Ascending aorta (tissue), 2 donors: ENCODE measurements at regions of chr17 and their contacts with region 1.

Region 1: DNA sequence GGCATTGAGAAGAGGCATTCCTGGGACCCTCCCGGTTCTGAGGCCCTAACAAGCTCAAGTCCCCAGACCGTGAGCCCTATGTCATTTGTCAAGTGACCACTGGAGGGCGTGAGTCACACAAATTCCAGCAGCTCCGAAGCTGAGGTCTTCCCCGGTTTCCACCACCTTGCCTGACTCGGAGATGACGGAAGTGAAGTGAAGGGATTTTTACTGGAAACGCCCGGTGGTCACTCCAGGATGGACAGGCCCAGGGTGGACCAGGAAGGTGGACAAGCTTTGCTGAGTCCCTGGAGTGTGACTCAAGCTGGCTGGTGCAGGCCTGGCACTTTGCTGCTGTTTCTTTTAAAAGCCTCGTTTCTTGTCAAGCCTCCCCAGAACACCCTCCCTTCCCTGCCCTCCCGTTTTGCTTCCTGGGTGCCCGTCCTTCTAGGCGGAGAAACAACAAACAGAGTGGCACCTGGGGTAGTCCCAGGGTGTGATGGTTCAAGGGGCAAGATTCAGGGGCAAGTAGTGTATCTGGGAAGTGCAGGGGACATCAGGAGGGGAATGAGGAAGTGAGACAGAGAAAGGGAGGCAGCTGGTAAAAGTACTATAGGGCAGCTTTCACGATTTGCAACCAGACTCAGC is 5.3 kb upstream of the NOS2 start:
- DNase-seq: peak; percentile 47 to 93
- H3K4me3 ChIP-seq: peak overlapping the region; percentile 1 to 55
- H3K27ac ChIP-seq: peak overlapping the region; percentile 17 to 36
- H3K4me1 ChIP-seq: no peaks in the 10 kb centered on the region
- H3K27me3 ChIP-seq: no peaks in the 10 kb centered on the region
- CTCF ChIP-seq: peak; percentile 74 to 79 (median 76)

Region 2: DNA sequence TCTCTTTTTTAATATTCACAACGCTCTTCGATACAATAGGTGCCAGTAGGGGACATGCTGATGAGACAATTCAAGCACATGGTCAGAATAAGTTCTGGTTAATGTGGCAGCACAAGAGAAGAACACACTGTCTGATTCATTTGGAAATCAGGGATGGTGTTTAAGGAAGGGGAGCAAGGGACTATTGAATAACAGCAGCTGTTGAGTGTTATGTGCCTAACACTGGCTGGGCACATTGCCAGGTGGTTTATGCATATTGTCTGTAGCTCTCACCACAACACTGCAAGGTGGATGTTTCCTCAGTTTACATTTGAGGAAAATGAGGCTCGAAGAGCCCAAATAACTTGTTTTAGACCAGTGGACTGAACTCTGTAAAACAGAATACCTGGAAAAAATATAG is 43.3 kb after region 1 on chr17:
- intact Hi-C with region 1: no loop called
- DNase-seq: no peak
- H3K4me3 ChIP-seq: no peak overlapping the region
- H3K27ac ChIP-seq: no peak overlapping the region
- H3K4me1 ChIP-seq: no peaks in the 10 kb centered on the region
- H3K27me3 ChIP-seq: no peaks in the 10 kb centered on the region
- CTCF ChIP-seq: no peak

Region 3: DNA sequence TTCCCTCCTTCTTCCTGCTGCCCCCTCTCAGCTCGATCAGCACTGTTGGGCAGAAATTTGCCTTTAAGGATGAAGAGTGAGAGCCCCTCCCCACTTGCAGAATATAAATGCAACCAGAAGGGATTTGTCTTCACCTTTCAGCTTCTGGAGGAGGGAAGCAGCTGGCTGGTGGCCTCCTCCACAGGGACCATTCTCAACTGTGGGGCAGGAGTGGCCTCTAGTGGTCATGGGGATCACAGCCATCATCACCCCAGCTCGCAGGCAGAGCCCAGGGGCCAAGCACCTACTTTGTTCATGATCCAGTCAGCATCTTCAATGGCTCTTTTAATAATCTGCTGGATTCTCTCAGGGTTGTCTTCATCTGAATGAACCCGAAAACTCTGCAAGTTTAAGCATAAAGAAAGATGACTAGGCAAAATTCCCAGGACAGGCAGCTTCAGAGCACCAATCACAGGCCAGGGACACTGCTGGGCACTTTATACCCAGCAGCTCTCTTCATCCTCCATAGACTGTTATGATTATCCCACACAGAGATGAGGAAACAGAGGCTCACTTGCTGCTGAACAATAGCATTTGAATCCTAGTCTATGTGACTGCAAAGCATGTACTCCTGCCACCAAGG is 74.5 kb after region 1 on chr17:
- intact Hi-C with region 1: loop called (anchors 1 kb)
- DNase-seq: no peak
- H3K4me3 ChIP-seq: no peak overlapping the region
- H3K27ac ChIP-seq: no peak overlapping the region
- H3K4me1 ChIP-seq: no peaks in the 10 kb centered on the region
- H3K27me3 ChIP-seq: no peaks in the 10 kb centered on the region
- CTCF ChIP-seq: peak; percentile 44 to 63 (median 53)

Region 4: GRCh38 chr17:27892866-27893769 is 87.5 kb after region 1 on chr17 and contains the start of gene LYRM9:
- intact Hi-C with region 1: loop called (anchors 1 kb)
- DNase-seq: peak; percentile 62 to 96
- H3K4me3 ChIP-seq: peak within 1 kb of the TSS; percentile 76 to 98
- H3K27ac ChIP-seq: peak within 1 kb of the TSS; percentile 62 to 88
- H3K4me1 ChIP-seq: peaks cover 0 to 9% of the 10 kb centered on the region in 2 donors
- H3K27me3 ChIP-seq: no peaks in the 10 kb centered on the region
- CTCF ChIP-seq: peak; percentile 72 to 92 (median 82)
- total RNA-seq, gene LYRM9: 22.2 TPM